Right ventricle myocardium inferior (tissue), 1 donor: ENCODE measurements at regions of chr1 and their contacts with region 1.

Region 1: DNA sequence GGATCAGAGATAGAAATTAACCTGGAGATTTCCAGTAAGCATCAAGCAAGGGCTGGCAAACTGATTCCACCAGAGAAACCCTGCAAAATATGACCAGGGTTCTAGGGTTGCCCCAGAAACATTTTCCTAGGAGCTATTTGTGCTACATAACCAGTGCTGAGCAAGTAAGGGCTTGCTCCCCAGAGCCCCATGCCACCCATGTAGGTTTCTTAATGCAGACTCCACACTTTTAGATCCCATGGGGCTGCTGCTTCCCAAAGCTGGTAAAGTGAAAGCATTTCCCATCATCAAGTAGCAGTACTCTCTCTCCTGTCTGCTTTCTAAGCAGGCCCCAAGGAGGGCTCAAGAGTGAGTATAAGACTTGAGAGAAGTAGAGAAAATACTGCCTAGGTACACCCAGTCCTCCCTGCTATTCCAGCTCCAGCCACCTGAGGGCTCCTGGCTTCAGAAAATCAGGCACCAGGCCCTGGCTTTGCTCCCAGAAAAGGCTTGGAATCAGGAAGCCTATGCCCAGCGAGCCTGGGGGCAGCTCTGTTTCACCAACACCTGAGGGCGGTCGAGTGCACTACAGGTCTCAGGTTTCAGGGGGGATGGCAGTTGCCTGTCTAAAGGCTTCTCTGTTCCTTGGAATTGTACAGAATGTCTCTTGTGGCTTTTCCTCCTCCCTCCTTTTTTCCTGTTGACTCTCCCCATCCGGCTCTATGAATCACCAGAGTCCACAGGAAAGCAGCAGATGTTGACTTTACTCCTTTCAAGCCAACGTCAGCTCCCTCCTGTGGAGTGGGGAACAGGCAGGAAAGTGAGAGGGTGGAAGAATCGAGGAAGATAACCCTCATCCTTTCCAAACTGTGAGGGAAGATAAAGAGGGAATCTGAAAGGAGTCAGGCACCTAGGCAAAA is 6.2 kb upstream of the ANKRD35 start:
- DNase-seq: peak; percentile 88
- ATAC-seq: peak; percentile 91

Region 2: DNA sequence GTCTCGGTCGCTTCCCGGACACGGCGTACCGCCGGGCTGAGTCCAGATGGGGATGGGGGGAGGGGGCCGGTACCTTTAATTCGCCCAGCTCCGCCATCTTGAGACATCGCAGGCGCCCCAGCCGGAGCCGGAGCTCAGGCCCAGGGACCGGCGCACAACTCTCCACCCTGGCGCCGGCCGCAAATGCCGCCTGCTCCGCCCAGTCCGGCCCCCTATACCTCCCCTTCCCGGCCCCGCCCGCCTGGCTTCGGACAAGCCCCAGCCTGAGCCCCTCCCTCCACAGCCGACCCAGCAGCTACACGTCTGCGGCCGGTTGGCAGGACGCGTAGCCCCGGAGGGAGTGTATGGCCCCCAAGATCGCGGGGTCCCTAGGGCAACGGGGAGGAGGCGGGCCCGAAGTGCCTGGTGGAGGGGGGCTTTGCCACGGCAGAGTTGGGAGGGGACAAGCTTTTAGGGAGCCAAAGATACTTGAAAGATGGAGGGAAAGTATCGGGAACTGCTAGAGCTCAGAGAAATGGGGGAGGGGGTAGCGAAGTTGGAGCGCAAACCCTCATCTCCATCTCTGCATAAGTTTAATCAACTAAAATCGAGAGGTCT is 32.8 kb before region 1 on chr1 and contains the start of gene PIAS3:
- intact Hi-C with region 1: loop called (anchors 2 kb)
- DNase-seq: peak; percentile 98
- ATAC-seq: peak; percentile 97
- total RNA-seq, gene PIAS3: 15.7 TPM

Region 3: DNA sequence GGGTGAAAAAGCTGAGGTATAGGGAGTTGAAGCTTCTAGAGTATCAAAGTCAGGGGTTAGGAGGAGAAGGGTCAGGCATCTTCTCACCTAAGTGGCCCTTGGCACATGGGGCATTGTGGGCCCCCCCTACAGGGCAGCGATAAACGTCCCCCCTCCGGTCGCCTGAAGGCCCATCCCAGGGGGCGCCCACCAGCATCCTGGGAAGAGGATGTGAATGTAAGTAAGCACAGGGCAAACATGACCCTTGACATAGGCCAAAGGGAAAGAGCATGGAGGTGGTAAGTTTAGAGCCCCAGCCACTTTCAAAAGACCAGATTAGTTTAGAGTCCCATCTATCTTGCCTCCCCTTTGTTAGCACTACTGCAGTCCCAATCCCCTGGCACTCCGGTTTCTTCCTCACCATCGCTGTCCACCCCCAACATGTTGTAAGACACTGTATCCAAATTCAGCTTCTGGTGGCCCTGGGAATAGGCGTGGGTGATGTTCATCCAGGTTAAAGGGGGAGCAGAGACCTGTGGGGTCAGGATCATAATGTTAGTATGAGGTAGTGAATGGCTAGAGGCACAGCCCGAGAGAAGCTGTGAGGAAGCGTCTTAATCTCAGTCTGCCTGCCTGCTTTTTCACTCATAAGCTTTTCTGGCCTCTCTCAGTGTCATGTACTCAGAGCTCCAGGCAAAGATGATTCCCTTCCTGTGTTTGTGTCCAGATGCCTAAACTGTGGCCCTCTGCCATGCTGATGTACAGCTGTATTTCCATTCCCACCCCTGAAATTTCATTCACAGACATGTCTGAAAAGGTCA is 15.3 kb after region 1 on chr1:
- intact Hi-C with region 1: loop called (anchors 1 kb)
- DNase-seq: no peak
- ATAC-seq: no peak

Region 4: DNA sequence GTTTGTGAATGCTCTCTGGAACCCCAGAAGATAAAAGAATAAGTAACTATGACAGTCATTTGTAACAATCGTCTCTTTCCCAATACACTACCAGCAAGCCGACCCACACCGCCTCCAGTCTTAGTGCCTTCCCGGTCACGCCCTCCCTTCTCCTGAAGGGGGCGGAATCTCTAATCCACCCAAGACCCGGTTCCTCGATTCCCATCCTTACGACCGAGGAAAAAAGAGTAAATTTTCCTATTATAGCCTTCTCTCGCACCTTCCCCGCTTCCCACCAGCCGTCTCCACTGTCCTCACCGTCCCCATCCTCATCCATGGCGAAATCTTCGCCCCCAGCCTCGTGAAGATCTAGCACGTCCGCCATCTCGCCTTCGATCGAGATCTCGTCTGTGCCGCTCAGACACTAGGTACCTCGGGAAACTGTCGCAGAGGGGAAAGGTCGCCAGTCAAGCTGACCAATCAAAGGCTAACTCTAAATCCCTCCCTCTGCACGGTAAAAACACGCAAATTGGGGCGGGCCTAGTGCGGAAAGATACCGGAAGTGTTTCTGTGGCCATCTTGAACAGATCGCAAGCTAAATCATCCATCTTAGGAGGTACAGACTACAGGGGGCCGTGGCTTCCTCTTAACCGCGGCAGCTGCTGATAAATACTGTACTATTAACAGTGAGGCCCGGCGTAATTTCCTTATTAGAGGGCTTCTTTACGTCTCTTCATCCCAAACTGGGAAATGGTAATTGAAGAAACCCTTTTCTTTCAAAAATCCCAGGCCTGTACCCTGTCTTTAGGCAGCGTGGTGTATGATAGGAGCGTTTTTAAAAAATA is 35.4 kb after region 1 on chr1 and contains the start of gene RBM8A:
- intact Hi-C with region 1: loop called (anchors 5 kb)
- DNase-seq: peak; percentile 94
- ATAC-seq: peak; percentile 99
- total RNA-seq, gene RBM8A: 63.6 TPM

Region 5: GRCh38 chr1:145978854-145979759 is 87.3 kb after region 1 on chr1:
- intact Hi-C with region 1: no loop called
- DNase-seq: peak; percentile 95
- ATAC-seq: peak; percentile 94

Region 6: DNA sequence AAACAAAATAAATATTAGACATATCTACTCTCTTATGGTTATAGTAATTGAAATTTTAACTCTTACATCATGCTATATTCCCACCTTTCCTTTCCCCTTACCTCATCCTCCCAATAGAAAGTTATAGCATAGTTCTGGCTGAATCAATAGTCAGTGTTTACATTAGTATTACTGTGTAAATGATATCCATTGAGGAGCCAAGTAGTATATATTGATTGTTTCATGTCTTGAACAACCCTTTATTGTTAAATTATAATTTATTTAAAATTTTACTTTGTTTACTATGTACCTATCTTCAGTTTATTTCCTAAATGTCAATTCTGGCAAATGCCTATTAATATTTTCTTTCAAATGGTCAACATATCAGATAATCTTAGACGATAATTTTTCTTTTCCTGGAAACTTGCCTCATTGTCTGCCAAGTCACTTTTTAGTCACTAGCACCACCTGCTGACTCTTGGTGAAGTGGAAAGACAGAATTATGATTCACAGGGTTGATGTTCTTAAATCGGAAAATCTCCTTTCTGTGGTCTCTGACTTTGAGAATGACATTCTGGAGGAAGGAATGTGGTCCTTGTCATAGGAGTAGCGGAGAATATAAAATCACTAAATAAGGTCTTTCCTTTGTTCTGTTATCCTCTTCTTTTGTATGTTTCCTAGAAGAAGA is 121.0 kb after region 1 on chr1:
- intact Hi-C with region 1: loop called (anchors 2 kb)
- DNase-seq: no peak
- ATAC-seq: peak; percentile 34